Mammary epithelial cell (primary cell): ENCODE measurements at regions of chrX and their contacts with region 1.

Region 1: GRCh38 chrX:70970482-70970995 is 39.6 kb upstream of the SLC7A3 start:
- DNase-seq: peak; percentile 7
- H3K4me3 ChIP-seq: no peak overlapping the region
- H3K27ac ChIP-seq: no peak overlapping the region
- H3K4me1 ChIP-seq: no peaks in the 10 kb centered on the region
- H3K27me3 ChIP-seq: no peaks in the 10 kb centered on the region
- CTCF ChIP-seq: peak; percentile 28 to 29

Region 2: GRCh38 chrX:70769659-70770232 is 200.8 kb before region 1 on chrX:
- CTCF ChIA-PET with region 1: interaction called, 5 read pairs
- dilution Hi-C with region 1: no loop called
- in situ Hi-C with region 1: loop called in 1 of 2 experiments (anchors 25 kb)
- intact Hi-C with region 1: no loop called
- DNase-seq: no peak
- H3K4me3 ChIP-seq: no peak overlapping the region
- H3K27ac ChIP-seq: no peak overlapping the region
- H3K4me1 ChIP-seq: no peaks in the 10 kb centered on the region
- H3K27me3 ChIP-seq: no peaks in the 10 kb centered on the region
- CTCF ChIP-seq: peak; percentile 37 to 43

Region 3: DNA sequence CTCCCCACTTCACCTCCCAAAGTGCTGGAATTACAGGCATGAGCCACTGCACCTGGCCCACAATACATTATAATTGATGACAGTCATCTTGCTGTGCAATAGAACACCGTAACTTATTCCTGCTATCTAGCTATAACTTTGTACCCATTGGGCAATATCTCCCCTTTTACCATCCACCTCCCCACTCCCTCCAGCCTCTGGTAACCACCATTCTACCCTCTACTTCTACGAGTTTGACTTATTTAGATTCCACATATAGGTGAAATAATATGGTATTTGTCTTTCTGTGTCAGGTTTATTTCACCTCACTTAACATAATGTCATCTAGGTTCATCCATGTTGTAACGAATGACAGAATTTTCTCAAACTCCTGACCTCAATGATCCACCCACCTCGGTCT is 53.8 kb before region 1 on chrX:
- CTCF ChIA-PET with region 1: interaction called, 38 read pairs
- dilution Hi-C with region 1: no loop called
- in situ Hi-C with region 1: no loop called
- intact Hi-C with region 1: no loop called
- DNase-seq: no peak
- H3K4me3 ChIP-seq: no peak overlapping the region
- H3K27ac ChIP-seq: no peak overlapping the region
- H3K4me1 ChIP-seq: no peaks in the 10 kb centered on the region
- H3K27me3 ChIP-seq: no peaks in the 10 kb centered on the region
- CTCF ChIP-seq: no peak